Mammary epithelial cell (primary cell): ENCODE measurements at regions of chr11 and their contacts with region 1.

Region 1: DNA sequence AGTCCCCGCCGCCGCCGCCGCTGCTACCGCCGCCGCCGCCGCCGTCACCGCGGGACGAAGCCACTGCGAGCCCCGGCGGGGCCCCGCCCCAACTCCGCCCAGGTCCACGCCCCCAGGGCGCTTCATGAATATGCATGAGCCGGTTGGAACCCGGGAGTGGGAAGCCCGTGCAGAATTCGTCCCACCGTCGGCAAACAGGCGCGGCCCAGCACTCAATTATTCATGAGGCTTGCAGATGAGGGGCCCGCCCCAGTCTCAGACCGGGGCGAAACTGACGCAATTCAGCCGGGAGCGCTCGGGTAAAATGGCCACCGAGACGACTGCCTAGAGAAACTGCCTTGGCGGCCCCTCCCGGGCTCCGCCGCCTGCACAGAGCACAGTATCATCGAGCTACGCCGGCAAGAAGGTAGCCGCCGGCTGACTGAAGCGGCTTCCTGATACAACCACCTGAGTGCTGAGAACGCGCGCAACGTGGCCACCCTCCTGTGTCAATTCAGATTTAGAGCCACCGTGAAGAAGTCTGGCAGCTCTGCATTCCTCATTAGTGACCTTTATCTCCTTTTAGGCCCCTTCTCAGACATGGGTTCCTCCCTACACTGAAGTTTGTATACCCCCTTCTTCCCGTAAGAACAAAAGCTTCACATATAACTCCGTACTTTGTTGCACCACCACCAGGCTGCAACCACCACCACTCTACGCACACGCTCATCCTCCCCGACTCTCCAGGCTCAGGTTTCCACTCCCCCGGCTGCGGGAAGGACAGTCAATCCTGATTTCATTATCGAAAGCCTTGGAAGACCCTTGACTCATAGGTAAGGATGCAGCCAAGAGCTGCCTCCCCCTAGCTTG is at the start of gene TNKS1BP1:
- DNase-seq: peak; percentile 97
- H3K4me3 ChIP-seq: peak within 1 kb of the TSS; percentile 82 to 90 (median 90)
- H3K27ac ChIP-seq: peak within 1 kb of the TSS; percentile 96
- H3K4me1 ChIP-seq: peaks cover 50% of the 10 kb centered on the region
- H3K27me3 ChIP-seq: no peaks in the 10 kb centered on the region
- CTCF ChIP-seq: no peak
- total RNA-seq, gene TNKS1BP1: 195 to 208 TPM

Region 2: GRCh38 chr11:57131080-57131790 is 193.9 kb before region 1 on chr11:
- CTCF ChIA-PET with region 1: no interaction called
- dilution Hi-C with region 1: no loop called
- in situ Hi-C with region 1: no loop called
- intact Hi-C with region 1: loop called (anchors 5 kb)
- DNase-seq: peak; percentile 39
- H3K4me3 ChIP-seq: no peak overlapping the region
- H3K27ac ChIP-seq: no peak overlapping the region
- H3K4me1 ChIP-seq: no peaks in the 10 kb centered on the region
- H3K27me3 ChIP-seq: no peaks in the 10 kb centered on the region
- CTCF ChIP-seq: peak; percentile 78 to 93

Region 3: GRCh38 chr11:57277845-57278709 is 47.0 kb before region 1 on chr11:
- CTCF ChIA-PET with region 1: no interaction called
- dilution Hi-C with region 1: no loop called
- in situ Hi-C with region 1: no loop called
- intact Hi-C with region 1: loop called (anchors 1 kb)
- DNase-seq: peak; percentile 64
- H3K4me3 ChIP-seq: no peak overlapping the region
- H3K27ac ChIP-seq: peak overlapping the region; percentile 62
- H3K4me1 ChIP-seq: peaks cover 36% of the 10 kb centered on the region
- H3K27me3 ChIP-seq: no peaks in the 10 kb centered on the region
- CTCF ChIP-seq: peak; percentile 82 to 93

Region 4: GRCh38 chr11:57294605-57295131 is 30.4 kb before region 1 on chr11:
- CTCF ChIA-PET with region 1: no interaction called
- dilution Hi-C with region 1: no loop called
- in situ Hi-C with region 1: no loop called
- intact Hi-C with region 1: loop called (anchors 1 kb)
- DNase-seq: peak; percentile 53
- H3K4me3 ChIP-seq: no peak overlapping the region
- H3K27ac ChIP-seq: peak overlapping the region; percentile 47
- H3K4me1 ChIP-seq: peaks cover 50% of the 10 kb centered on the region
- H3K27me3 ChIP-seq: no peaks in the 10 kb centered on the region
- CTCF ChIP-seq: no peak

Region 5: DNA sequence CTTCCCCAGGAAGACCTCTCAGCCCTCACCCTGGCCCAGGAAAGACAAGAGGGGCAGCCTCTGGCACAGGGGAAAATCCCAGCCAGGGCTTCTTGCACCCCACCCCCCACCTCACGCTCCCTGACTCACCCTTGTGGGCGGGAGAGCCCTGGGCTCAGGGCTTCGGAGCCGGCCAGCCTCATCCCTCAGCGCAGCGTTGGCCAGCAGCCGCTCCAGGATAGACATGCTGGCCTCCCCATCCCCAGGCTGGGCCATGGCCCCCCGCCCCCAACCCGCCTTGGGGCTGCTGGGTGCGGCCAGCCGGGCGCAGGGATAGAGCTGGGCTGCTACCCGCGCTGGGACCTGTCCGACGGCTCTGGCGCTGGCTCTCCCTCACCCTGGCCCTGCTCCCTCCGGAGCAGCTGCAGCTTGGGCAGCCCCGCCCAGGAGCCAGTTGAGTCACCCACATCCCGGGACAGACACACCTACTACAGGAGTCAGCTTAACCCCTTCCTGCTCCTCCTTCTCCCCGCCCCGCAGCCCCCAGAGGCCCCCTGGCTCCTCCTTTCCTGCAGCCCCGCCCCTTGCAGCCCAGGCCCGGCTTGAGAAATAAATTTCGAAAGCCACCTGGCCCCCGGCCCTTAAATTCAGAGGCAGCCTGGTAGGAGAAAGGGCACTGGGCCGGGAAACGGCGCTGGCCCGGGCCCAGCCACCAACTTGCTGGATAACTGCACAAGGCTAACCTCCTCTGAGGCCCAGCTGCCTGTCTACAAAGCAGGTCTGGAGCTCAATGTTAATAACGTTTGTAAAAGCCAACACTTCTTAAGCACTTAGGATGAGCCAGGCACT is 13.8 kb before region 1 on chr11:
- CTCF ChIA-PET with region 1: interaction called, 12 read pairs
- dilution Hi-C with region 1: no loop called
- in situ Hi-C with region 1: no loop called
- intact Hi-C with region 1: loop called (anchors 1 kb)
- DNase-seq: peak; percentile 96
- H3K4me3 ChIP-seq: peak overlapping the region; percentile 37 to 64 (median 55)
- H3K27ac ChIP-seq: peak overlapping the region; percentile 80
- H3K4me1 ChIP-seq: peaks cover 63% of the 10 kb centered on the region
- H3K27me3 ChIP-seq: no peaks in the 10 kb centered on the region
- CTCF ChIP-seq: no peak

Region 6: DNA sequence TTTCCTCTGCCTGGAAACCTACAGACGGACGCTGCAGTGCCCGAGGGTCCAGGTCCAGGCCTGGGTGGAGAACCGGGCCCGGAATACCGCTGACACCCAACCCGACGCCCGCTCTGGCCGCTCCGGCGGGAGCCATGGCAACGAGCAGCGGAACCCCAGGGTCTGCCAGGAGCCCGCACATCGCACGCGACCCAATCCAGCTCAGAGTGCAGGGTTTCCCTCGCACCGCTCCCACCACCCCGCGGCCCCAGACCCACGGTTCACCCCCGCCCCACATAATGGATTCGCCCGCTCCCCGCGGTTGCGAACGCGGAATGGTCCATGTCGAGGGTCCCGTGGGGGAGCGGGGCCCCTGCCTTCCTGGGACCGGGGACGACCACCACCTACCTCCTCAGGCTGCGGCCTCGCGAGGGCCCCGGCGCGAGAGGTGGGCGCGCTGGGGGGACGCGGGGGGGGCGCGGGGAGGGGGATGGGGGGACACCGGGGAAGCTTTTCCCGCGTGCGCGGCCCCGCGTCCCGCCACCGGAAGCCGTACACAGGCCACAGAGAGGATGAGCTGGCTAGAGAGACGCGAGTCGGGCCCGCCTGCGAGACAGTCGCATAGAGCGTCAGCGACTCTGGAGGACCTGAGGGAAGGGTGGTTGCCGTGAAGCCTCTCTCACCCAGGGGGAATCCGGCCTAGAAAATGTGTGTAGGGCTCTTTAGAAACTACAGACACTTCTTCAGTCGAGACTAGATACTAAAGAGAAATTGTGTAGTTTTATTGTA is 10.4 kb after region 1 on chr11 and contains the start of gene SSRP1:
- CTCF ChIA-PET with region 1: no interaction called
- dilution Hi-C with region 1: no loop called
- in situ Hi-C with region 1: no loop called
- intact Hi-C with region 1: loop called (anchors 1 kb)
- DNase-seq: peak; percentile 78
- H3K4me3 ChIP-seq: peak within 1 kb of the TSS; percentile 56 to 91 (median 82)
- H3K27ac ChIP-seq: peak within 1 kb of the TSS; percentile 73
- H3K4me1 ChIP-seq: peaks cover 15% of the 10 kb centered on the region
- H3K27me3 ChIP-seq: no peaks in the 10 kb centered on the region
- CTCF ChIP-seq: no peak
- total RNA-seq, gene SSRP1: 53.0 to 127 TPM

Region 7: GRCh38 chr11:57406337-57406904 is 81.3 kb after region 1 on chr11:
- CTCF ChIA-PET with region 1: no interaction called
- dilution Hi-C with region 1: no loop called
- in situ Hi-C with region 1: no loop called
- intact Hi-C with region 1: no loop called
- DNase-seq: peak; percentile 14
- H3K4me3 ChIP-seq: no peak overlapping the region
- H3K27ac ChIP-seq: no peak overlapping the region
- H3K4me1 ChIP-seq: peaks cover 12% of the 10 kb centered on the region
- H3K27me3 ChIP-seq: no peaks in the 10 kb centered on the region
- CTCF ChIP-seq: no peak